ENCODE measurements at regions of chr21 and their contacts with region 1.

Region 1: DNA sequence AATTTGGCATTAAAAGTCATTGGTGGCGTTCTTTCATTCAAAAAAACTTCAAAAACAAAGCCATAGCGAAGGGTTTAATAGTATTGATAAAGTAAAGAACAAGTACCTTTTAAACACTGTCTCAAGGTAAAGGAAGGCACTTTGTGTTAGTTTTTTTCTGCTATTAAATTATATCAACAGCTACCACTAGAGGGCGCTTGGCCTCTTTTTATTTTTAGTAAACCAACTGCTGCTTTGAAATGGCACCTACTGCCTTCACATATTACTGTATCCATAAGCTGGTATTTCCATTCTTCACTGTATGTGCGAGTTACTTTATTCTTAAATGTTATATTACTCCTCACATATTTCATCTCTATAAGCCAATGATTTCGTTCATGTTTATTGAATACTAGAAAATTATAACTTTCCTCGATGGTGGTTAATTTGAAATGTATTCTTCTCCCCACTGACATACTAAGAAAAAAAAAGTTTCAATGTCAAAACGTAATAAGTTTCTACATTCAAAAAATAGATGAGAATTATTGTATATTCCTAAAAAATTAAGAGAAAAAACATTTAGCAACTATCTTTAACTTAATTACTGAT is 125.7 kb upstream of the CXADR start:
- DNase-seq: peak; percentile 62
- ATAC-seq: peak; percentile 65
- H3K4me3 Mint-ChIP-seq: no peak overlapping the region
- H3K27ac Mint-ChIP-seq: no peak overlapping the region
- H3K4me1 Mint-ChIP-seq: no peaks in the 10 kb centered on the region
- H3K27me3 Mint-ChIP-seq: peaks cover 7% of the 10 kb centered on the region
- CTCF ChIP-seq: peak; percentile 81

Region 2: GRCh38 chr21:16551101-16551695 is 835.9 kb before region 1 on chr21:
- CTCF ChIA-PET with region 1: no interaction called
- POLR2A ChIA-PET with region 1: no interaction called
- intact Hi-C with region 1: no loop called
- DNase-seq: no peak
- ATAC-seq: no peak
- H3K4me3 Mint-ChIP-seq: no peak overlapping the region
- H3K27ac Mint-ChIP-seq: no peak overlapping the region
- H3K4me1 Mint-ChIP-seq: no peaks in the 10 kb centered on the region
- H3K27me3 Mint-ChIP-seq: no peaks in the 10 kb centered on the region
- CTCF ChIP-seq: no peak

Region 3: GRCh38 chr21:17554679-17555465 is 167.7 kb after region 1 on chr21:
- CTCF ChIA-PET with region 1: interaction called, 11 read pairs
- POLR2A ChIA-PET with region 1: no interaction called
- intact Hi-C with region 1: no loop called
- DNase-seq: no peak
- ATAC-seq: no peak
- H3K4me3 Mint-ChIP-seq: no peak overlapping the region
- H3K27ac Mint-ChIP-seq: no peak overlapping the region
- H3K4me1 Mint-ChIP-seq: no peaks in the 10 kb centered on the region
- H3K27me3 Mint-ChIP-seq: no peaks in the 10 kb centered on the region
- CTCF ChIP-seq: no peak

Region 4: DNA sequence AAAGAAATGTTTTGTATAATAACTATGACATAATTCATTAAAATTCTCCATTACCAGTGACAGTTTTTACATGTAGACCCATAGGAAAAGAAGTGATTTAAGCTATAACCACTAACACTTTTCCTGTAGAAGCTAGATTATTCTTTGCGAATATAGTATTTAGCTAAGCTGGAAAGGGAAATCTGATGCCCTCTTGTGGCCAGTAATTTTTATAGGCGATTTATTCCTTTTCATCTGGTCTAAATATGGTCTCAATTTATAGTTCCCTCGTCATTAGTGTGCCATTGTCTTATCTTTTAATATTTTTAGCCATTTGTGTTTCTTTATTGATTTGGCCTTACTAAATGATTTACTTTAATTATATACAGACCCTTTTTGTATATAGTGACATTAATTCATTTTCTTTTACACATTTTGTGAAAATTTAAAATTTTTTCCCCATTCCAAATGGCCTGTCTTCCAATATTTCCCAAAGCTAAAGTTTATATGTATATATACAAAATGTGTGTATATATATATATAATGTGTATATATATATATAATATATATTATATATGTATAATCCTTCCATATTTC is 198.8 kb after region 1 on chr21:
- CTCF ChIA-PET with region 1: interaction called, 58 read pairs
- POLR2A ChIA-PET with region 1: no interaction called
- intact Hi-C with region 1: loop called (anchors 5 kb)
- DNase-seq: peak; percentile 9
- ATAC-seq: no peak
- H3K4me3 Mint-ChIP-seq: no peak overlapping the region
- H3K27ac Mint-ChIP-seq: no peak overlapping the region
- H3K4me1 Mint-ChIP-seq: no peaks in the 10 kb centered on the region
- H3K27me3 Mint-ChIP-seq: no peaks in the 10 kb centered on the region
- CTCF ChIP-seq: peak; percentile 66

Measured in activated CD8-positive, alpha-beta T cell treated with anti-CD3 and anti-CD28 coated beads for 36 hours (primary cell).